ENCODE measurements at regions of chr6 and their contacts with region 1.

Region 1: GRCh38 chr6:119147101-119148053 is 68.9 kb upstream of the FAM184A start:
- DNase-seq: peak; percentile 96
- ATAC-seq: peak; percentile 86
- H3K4me3 ChIP-seq: peak overlapping the region; percentile 1 to 41
- H3K27ac ChIP-seq: peak overlapping the region; percentile 83
- H3K4me1 ChIP-seq: peaks cover 53 to 56% of the 10 kb centered on the region in 2 experiments
- H3K27me3 ChIP-seq: no peaks in the 10 kb centered on the region
- CTCF ChIP-seq: no peak
- POLR2A ChIP-seq: peak; percentile 28
- RAD21 ChIP-seq: peak; percentile 26

Region 2: GRCh38 chr6:119129148-119129967 is 18.0 kb before region 1 on chr6:
- CTCF ChIA-PET with region 1: interaction called, 11 read pairs
- POLR2A ChIA-PET with region 1: interaction called, 5 read pairs
- RAD21 ChIA-PET with region 1: interaction called, 3 to 4 read pairs
- intact Hi-C with region 1: loop called (anchors 1 kb)
- DNase-seq: peak; percentile 72
- ATAC-seq: peak; percentile 75
- H3K4me3 ChIP-seq: peak overlapping the region; percentile 3 to 31; a peak in 2 of 4 replicates
- H3K27ac ChIP-seq: peak overlapping the region; percentile 62
- H3K4me1 ChIP-seq: peaks cover 38 to 60% of the 10 kb centered on the region in 2 experiments
- H3K27me3 ChIP-seq: no peaks in the 10 kb centered on the region
- CTCF ChIP-seq: peak; percentile 66 to 90 (median 76); a peak in 5 of 6 replicates
- POLR2A ChIP-seq: no peak
- RAD21 ChIP-seq: peak; percentile 87

Region 3: GRCh38 chr6:119333707-119334295 is 186.4 kb after region 1 on chr6:
- CTCF ChIA-PET with region 1: no interaction called
- POLR2A ChIA-PET with region 1: no interaction called
- RAD21 ChIA-PET with region 1: no interaction called
- intact Hi-C with region 1: loop called (anchors 5 kb)
- DNase-seq: no peak
- ATAC-seq: peak; percentile 76
- H3K4me3 ChIP-seq: no peak overlapping the region
- H3K27ac ChIP-seq: no peak overlapping the region
- H3K4me1 ChIP-seq: peaks cover 6 to 8% of the 10 kb centered on the region in 2 experiments; a peak in 2 of 4 replicates
- H3K27me3 ChIP-seq: no peaks in the 10 kb centered on the region
- CTCF ChIP-seq: peak; percentile 39 to 63 (median 54)
- POLR2A ChIP-seq: no peak
- RAD21 ChIP-seq: peak; percentile 71

Region 4: GRCh38 chr6:119742188-119742803 is 594.9 kb after region 1 on chr6:
- CTCF ChIA-PET with region 1: interaction called, 3 read pairs
- POLR2A ChIA-PET with region 1: no interaction called
- RAD21 ChIA-PET with region 1: no interaction called
- intact Hi-C with region 1: loop called (anchors 1 kb)
- DNase-seq: peak; percentile 53
- ATAC-seq: peak; percentile 93
- H3K4me3 ChIP-seq: no peak overlapping the region
- H3K27ac ChIP-seq: no peak overlapping the region
- H3K4me1 ChIP-seq: no peaks in the 10 kb centered on the region
- H3K27me3 ChIP-seq: no peaks in the 10 kb centered on the region
- CTCF ChIP-seq: peak; percentile 76 to 94 (median 85); a peak in 5 of 6 replicates
- POLR2A ChIP-seq: no peak
- RAD21 ChIP-seq: peak; percentile 89

Region 5: GRCh38 chr6:120378582-120379220 is 1231.3 kb after region 1 on chr6:
- CTCF ChIA-PET with region 1: no interaction called
- POLR2A ChIA-PET with region 1: no interaction called
- RAD21 ChIA-PET with region 1: no interaction called
- intact Hi-C with region 1: loop called (anchors 10 kb)
- DNase-seq: peak; percentile 70
- ATAC-seq: peak; percentile 93
- H3K4me3 ChIP-seq: no peak overlapping the region
- H3K27ac ChIP-seq: no peak overlapping the region
- H3K4me1 ChIP-seq: no peaks in the 10 kb centered on the region
- H3K27me3 ChIP-seq: no peaks in the 10 kb centered on the region
- CTCF ChIP-seq: peak; percentile 65 to 99 (median 82)
- POLR2A ChIP-seq: no peak
- RAD21 ChIP-seq: peak; percentile 82